ENCODE measurements at regions of chr9 and their contacts with region 1.

Region 1: GRCh38 chr9:88326026-88326425 is 62.2 kb upstream of the SPIN1 start:
- DNase-seq: no peak
- H3K4me3 ChIP-seq: no peak overlapping the region
- H3K27ac ChIP-seq: no peak overlapping the region
- H3K4me1 ChIP-seq: no peaks in the 10 kb centered on the region
- H3K27me3 ChIP-seq: peaks cover 0 to 11% (median 0%) of the 10 kb centered on the region in 4 donors
- CTCF ChIP-seq: no peak
- EP300 ChIP-seq: no peak
- POLR2A ChIP-seq: no peak

Region 2: GRCh38 chr9:88187631-88188030 is 138.4 kb before region 1 on chr9:
- intact Hi-C with region 1: no loop called
- DNase-seq: peak; percentile 4
- H3K4me3 ChIP-seq: no peak overlapping the region
- H3K27ac ChIP-seq: no peak overlapping the region
- H3K4me1 ChIP-seq: peaks cover 0 to 14% (median 10%) of the 10 kb centered on the region in 4 donors
- H3K27me3 ChIP-seq: no peaks in the 10 kb centered on the region
- CTCF ChIP-seq: no peak
- EP300 ChIP-seq: no peak
- POLR2A ChIP-seq: no peak

Region 3: GRCh38 chr9:88278021-88278420 is 48.0 kb before region 1 on chr9:
- intact Hi-C with region 1: loop called (anchors 5 kb)
- DNase-seq: no peak
- H3K4me3 ChIP-seq: no peak overlapping the region
- H3K27ac ChIP-seq: no peak overlapping the region
- H3K4me1 ChIP-seq: no peaks in the 10 kb centered on the region
- H3K27me3 ChIP-seq: peaks cover 0 to 5% (median 0%) of the 10 kb centered on the region in 4 donors
- CTCF ChIP-seq: no peak
- EP300 ChIP-seq: no peak
- POLR2A ChIP-seq: no peak

Measured in esophagus muscularis mucosa (tissue), 4 donors.